Caco-2 (cell line): ENCODE measurements at regions of chr10 and their contacts with region 1.

Region 1: GRCh38 chr10:117074621-117075020 is 63.4 kb downstream of the VAX1 start:
- DNase-seq: peak; percentile 62 to 63
- H3K4me3 ChIP-seq: no peak overlapping the region
- H3K4me3 Mint-ChIP-seq: no peak overlapping the region
- H3K27ac Mint-ChIP-seq: no peak overlapping the region
- H3K4me1 ChIP-seq: no peaks in the 10 kb centered on the region
- H3K4me1 Mint-ChIP-seq: no peaks in the 10 kb centered on the region
- H3K27me3 ChIP-seq: no peaks in the 10 kb centered on the region
- H3K27me3 Mint-ChIP-seq: no peaks in the 10 kb centered on the region
- CTCF ChIP-seq: peak; percentile 46 to 64

Region 2: GRCh38 chr10:116796910-116797513 is 277.6 kb before region 1 on chr10:
- CTCF ChIA-PET with region 1: interaction called, 3 read pairs
- POLR2A ChIA-PET with region 1: no interaction called
- intact Hi-C with region 1: loop called (anchors 1 kb)
- DNase-seq: peak; percentile 75 to 84
- H3K4me3 ChIP-seq: no peak overlapping the region
- H3K4me3 Mint-ChIP-seq: no peak overlapping the region
- H3K27ac Mint-ChIP-seq: no peak overlapping the region
- H3K4me1 ChIP-seq: no peaks in the 10 kb centered on the region
- H3K4me1 Mint-ChIP-seq: no peaks in the 10 kb centered on the region
- H3K27me3 ChIP-seq: no peaks in the 10 kb centered on the region
- H3K27me3 Mint-ChIP-seq: peaks cover 13% of the 10 kb centered on the region
- CTCF ChIP-seq: peak; percentile 87 to 97

Region 3: GRCh38 chr10:116836902-116837523 is 237.6 kb before region 1 on chr10:
- CTCF ChIA-PET with region 1: no interaction called
- POLR2A ChIA-PET with region 1: no interaction called
- intact Hi-C with region 1: loop called (anchors 1 kb)
- DNase-seq: no peak
- H3K4me3 ChIP-seq: no peak overlapping the region
- H3K4me3 Mint-ChIP-seq: no peak overlapping the region
- H3K27ac Mint-ChIP-seq: no peak overlapping the region
- H3K4me1 ChIP-seq: 0 out of 2 replicates have a peak, but pooled peaks cover 15% of the 10 kb centered on the region
- H3K4me1 Mint-ChIP-seq: no peaks in the 10 kb centered on the region
- H3K27me3 ChIP-seq: no peaks in the 10 kb centered on the region
- H3K27me3 Mint-ChIP-seq: no peaks in the 10 kb centered on the region
- CTCF ChIP-seq: peak in 1 of 2 experiments; percentile 26

Region 4: DNA sequence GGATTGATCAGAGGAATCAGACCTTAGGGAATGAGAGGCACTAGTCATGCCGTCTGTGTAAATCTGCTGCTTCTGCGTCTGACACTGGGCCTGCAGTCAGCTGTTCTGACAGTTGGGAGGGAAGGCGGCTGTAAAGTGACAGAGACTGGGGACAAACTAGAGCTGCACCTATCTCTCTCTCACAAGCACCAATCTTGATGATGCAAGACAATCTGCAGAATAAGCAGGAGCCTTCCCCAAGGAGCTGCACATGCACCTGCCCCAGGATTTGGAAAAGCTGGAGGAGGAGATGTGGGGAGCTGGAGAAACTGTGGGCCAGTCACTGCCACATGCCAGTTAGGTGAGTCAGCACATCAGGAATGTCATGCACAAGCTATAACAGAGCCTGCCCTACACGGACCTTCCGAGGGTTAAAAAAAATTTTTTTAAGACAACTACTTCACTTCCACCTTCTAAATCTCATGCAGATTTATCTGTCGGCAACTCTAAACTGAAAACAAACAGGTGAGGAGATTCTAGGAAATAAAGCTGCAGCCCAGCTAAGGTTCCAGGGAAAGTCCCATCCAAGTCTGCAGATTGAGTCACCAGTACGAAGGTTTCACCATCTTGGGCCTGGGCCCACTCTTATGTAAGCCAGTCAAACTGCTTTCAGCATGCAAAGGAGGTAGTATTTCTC is 186.1 kb before region 1 on chr10:
- CTCF ChIA-PET with region 1: no interaction called
- POLR2A ChIA-PET with region 1: no interaction called
- intact Hi-C with region 1: loop called (anchors 10 kb)
- DNase-seq: peak; percentile 49 to 60
- H3K4me3 ChIP-seq: no peak overlapping the region
- H3K4me3 Mint-ChIP-seq: no peak overlapping the region
- H3K27ac Mint-ChIP-seq: peak overlapping the region; percentile 51
- H3K4me1 ChIP-seq: peaks cover 16% of the 10 kb centered on the region
- H3K4me1 Mint-ChIP-seq: peaks cover 19% of the 10 kb centered on the region
- H3K27me3 ChIP-seq: no peaks in the 10 kb centered on the region
- H3K27me3 Mint-ChIP-seq: no peaks in the 10 kb centered on the region
- CTCF ChIP-seq: no peak

Region 5: GRCh38 chr10:116947842-116948529 is 126.6 kb before region 1 on chr10:
- CTCF ChIA-PET with region 1: interaction called, 6 read pairs
- POLR2A ChIA-PET with region 1: no interaction called
- intact Hi-C with region 1: loop called (anchors 5 kb)
- DNase-seq: peak in 1 of 2 experiments; percentile 21
- H3K4me3 ChIP-seq: no peak overlapping the region
- H3K4me3 Mint-ChIP-seq: no peak overlapping the region
- H3K27ac Mint-ChIP-seq: peak overlapping the region; percentile 42
- H3K4me1 ChIP-seq: peaks cover 18% of the 10 kb centered on the region
- H3K4me1 Mint-ChIP-seq: peaks cover 15% of the 10 kb centered on the region
- H3K27me3 ChIP-seq: no peaks in the 10 kb centered on the region
- H3K27me3 Mint-ChIP-seq: no peaks in the 10 kb centered on the region
- CTCF ChIP-seq: no peak